ENCODE measurements at regions of chr6 and their contacts with region 1.

Region 1: DNA sequence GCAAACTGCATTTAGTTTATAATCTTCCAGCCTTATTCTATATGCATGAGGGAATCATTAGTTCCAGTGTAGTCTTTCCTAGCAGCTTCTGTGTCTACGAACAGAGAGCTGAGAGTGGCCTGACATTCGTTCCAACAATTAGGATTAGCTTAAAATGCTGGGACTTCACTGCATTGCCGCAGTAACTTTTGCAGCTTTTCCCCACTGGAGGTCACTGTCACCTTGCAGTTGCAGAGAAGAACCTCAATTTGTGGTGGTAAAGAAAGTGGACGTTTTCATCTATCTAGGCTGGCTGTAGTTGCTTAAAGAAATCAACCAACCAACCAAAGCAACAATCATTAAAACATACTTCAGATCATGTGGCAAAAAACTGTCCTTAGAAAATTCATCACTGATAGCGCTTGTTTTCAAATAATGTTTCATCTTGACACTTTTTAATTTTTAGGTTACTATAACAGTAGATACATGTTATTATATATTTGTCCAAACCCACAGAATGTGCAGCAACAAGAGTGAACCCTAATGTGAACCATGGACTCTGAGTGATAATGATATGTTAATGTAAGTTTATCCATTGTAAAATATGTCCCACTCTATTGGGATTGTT is 12.2 kb downstream of the MYLK4 start:
- DNase-seq: peak in 8 of 9 donors; percentile 27 to 59 (median 50)
- ATAC-seq: peak; percentile 72
- H3K4me3 ChIP-seq: no peak overlapping the region
- H3K4me3 Mint-ChIP-seq: no peak overlapping the region
- H3K27ac ChIP-seq: no peak overlapping the region
- H3K27ac Mint-ChIP-seq: no peak overlapping the region
- H3K4me1 ChIP-seq: no peaks in the 10 kb centered on the region
- H3K4me1 Mint-ChIP-seq: peaks cover 0 to 5% (median 0%) of the 10 kb centered on the region in 7 donors
- H3K27me3 ChIP-seq: no peaks in the 10 kb centered on the region
- H3K27me3 Mint-ChIP-seq: peaks cover 0 to 21% (median 0%) of the 10 kb centered on the region in 5 donors

Region 2: DNA sequence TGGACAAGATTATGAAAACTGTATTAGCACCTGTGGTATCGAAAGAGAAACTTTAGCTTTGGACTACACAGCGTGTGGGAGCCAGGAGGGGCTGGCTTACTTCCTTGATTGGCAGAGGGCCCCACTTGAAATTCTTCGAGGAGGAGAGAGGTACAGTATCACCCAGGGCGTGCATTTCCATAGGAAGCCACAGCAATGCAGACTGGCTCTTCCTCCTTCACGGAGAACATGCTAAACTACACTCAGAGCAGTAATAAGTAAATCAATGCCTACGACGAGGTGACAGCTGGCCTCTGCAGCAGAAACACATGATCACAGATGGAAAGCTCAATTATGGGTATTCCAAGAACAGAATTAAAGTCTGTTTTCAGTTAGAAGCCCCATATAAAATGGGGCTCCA is 31.9 kb before region 1 on chr6:
- CTCF ChIA-PET with region 1: no interaction called
- POLR2A ChIA-PET with region 1: no interaction called
- intact Hi-C with region 1: no loop called
- DNase-seq: no peak
- ATAC-seq: no peak
- H3K4me3 ChIP-seq: no peak overlapping the region
- H3K4me3 Mint-ChIP-seq: no peak overlapping the region
- H3K27ac ChIP-seq: no peak overlapping the region
- H3K27ac Mint-ChIP-seq: no peak overlapping the region
- H3K4me1 ChIP-seq: no peaks in the 10 kb centered on the region
- H3K4me1 Mint-ChIP-seq: no peaks in the 10 kb centered on the region
- H3K27me3 ChIP-seq: no peaks in the 10 kb centered on the region
- H3K27me3 Mint-ChIP-seq: peaks cover 0 to 28% (median 12%) of the 10 kb centered on the region in 5 donors

Region 3: GRCh38 chr6:2749969-2750600 is 11.6 kb after region 1 on chr6:
- CTCF ChIA-PET with region 1: interaction called, 29 read pairs
- POLR2A ChIA-PET with region 1: no interaction called
- intact Hi-C with region 1: loop called (anchors 1 kb)
- DNase-seq: peak; percentile 32 to 71 (median 63)
- ATAC-seq: peak; percentile 86
- H3K4me3 ChIP-seq: no peak overlapping the region
- H3K4me3 Mint-ChIP-seq: no peak overlapping the region
- H3K27ac ChIP-seq: no peak overlapping the region
- H3K27ac Mint-ChIP-seq: no peak overlapping the region
- H3K4me1 ChIP-seq: no peaks in the 10 kb centered on the region
- H3K4me1 Mint-ChIP-seq: peaks cover 0 to 9% (median 3%) of the 10 kb centered on the region in 7 donors
- H3K27me3 ChIP-seq: no peaks in the 10 kb centered on the region
- H3K27me3 Mint-ChIP-seq: peaks cover 13 to 69% (median 19%) of the 10 kb centered on the region in 5 donors

Region 4: GRCh38 chr6:3108746-3109414 is 370.4 kb after region 1 on chr6:
- CTCF ChIA-PET with region 1: no interaction called
- POLR2A ChIA-PET with region 1: no interaction called
- intact Hi-C with region 1: no loop called
- DNase-seq: no peak
- ATAC-seq: no peak
- H3K4me3 ChIP-seq: no peak overlapping the region
- H3K4me3 Mint-ChIP-seq: no peak overlapping the region
- H3K27ac ChIP-seq: no peak overlapping the region
- H3K27ac Mint-ChIP-seq: peak overlapping the region in 7 of 9 donors; percentile 8 to 50 (median 26)
- H3K4me1 ChIP-seq: no peaks in the 10 kb centered on the region
- H3K4me1 Mint-ChIP-seq: peaks cover 0 to 13% (median 6%) of the 10 kb centered on the region in 7 donors
- H3K27me3 ChIP-seq: no peaks in the 10 kb centered on the region
- H3K27me3 Mint-ChIP-seq: no peaks in the 10 kb centered on the region

Region 5: DNA sequence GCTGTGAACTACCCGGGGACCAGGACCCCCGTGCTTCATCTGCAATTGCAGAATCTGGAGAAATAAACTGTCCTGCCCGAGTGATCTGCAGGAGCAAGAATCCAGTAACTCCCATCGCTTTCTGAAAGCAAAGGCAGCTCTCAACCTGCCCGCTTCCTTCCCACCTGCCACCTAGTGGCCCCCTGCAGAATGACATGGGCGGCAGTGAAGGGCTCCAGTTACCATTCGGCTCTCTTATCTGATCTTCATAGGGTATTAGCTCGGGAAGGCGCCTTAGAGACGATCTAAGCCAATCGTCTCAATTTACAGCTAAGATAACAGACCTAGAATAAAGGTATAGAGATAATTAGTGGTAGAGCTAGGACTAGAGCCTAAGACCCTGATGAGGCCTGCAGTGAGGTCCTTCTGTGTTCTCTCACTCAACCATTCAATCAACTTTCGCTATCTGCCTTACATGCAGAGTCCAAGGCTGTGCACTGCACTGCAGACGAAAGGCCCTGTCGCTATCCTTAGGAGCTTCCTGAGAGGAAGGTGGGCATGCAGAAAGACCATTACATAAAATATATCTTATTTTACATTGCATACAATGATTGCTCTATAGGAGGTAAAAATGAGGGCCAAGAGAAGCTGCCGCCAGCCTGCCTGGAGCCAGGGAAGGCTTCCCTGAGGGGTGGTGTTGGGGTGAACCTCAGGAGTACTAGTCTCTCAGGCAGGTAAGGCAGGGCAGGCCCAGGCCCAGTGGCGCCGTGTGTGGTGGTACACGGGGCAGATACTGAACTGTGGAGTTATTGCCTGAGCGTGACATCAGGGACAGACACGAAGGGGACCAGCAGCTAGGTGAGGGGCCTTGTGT is 513.2 kb after region 1 on chr6:
- CTCF ChIA-PET with region 1: no interaction called
- POLR2A ChIA-PET with region 1: no interaction called
- intact Hi-C with region 1: loop called in 1 of 2 experiments (anchors 1 kb)
- DNase-seq: peak; percentile 58 to 82 (median 76)
- ATAC-seq: peak; percentile 94
- H3K4me3 ChIP-seq: no peak overlapping the region
- H3K4me3 Mint-ChIP-seq: peak overlapping the region in 5 of 10 donors; percentile 11 to 60 (median 40)
- H3K27ac ChIP-seq: no peak overlapping the region
- H3K27ac Mint-ChIP-seq: peak overlapping the region in 1 of 9 donors; percentile 54
- H3K4me1 ChIP-seq: peaks cover 7 to 8% of the 10 kb centered on the region in 2 donors
- H3K4me1 Mint-ChIP-seq: peaks cover 6 to 12% (median 7%) of the 10 kb centered on the region in 7 donors
- H3K27me3 ChIP-seq: no peaks in the 10 kb centered on the region
- H3K27me3 Mint-ChIP-seq: peaks cover 17 to 51% (median 27%) of the 10 kb centered on the region in 5 donors